ACHN (cell line): ENCODE measurements at regions of chr20 and their contacts with region 1.

Region 1: DNA sequence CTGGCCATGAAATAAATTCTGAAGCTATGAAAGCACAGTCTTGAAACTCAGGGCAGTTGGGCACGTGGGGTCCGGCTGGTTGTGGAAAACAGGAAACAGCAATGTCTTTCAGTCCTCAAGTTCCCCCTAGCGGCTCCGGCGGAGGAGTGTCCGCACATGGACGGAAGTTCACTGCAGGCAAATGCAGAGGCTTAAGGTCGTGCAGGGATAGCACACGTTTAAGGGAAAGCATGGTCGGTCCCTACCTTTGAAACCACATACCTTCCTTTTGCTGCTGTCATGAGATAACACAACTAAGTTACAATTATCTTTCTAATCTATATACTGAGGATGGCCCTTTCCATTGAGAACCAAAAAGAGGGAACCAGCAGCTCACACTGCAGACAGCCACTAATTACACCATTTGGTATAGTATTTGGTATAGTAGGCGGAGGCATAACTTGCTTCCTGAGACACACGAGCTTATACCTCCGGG is 52.6 kb upstream of the NFATC2 start:
- DNase-seq: peak; percentile 79

Region 2: GRCh38 chr20:51345601-51346101 is 249.4 kb before region 1 on chr20:
- in situ Hi-C with region 1: no loop called
- DNase-seq: no peak

Region 3: DNA sequence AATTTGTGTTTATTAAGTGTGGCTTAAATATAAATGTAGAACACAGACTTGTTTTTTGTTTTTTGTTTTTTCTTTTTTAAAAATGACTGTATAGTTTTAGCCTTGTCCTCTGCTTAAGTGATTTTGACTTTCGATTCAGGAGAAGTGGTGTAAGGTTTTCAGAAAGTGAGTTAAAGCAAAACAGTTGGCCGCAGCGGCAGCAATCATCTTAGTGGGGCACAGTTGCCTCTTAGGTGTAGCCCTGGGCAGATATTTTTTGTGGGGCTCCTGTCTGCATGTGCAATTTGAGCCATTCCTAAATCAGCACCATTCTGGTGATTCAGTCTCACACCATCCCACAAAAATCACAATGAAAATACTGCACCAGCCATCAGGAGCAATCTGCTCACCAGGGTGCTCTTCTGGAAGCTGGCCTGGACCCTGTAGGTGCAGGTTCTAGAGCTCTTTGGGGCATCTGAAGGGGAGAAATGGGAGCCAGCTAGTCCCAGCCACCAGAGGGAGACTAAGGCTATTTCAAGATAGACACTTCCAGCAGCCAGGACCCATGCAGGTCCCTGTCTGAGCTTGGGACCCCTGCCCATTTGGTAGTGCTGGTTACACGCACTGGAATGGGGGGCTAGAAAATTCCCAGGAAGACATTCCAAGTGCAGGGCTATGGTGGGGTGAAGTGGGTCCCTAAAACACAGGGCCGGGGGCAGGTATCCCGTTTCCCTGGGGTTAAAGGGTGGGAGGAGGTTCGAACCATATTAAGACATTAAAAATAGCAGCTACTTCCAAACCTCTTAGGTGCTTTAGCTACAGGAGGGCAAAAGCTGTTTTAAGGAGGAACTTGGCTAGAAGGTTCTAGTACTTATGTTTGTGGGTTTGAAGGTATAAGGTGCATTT is 209.2 kb before region 1 on chr20:
- in situ Hi-C with region 1: loop called (anchors 25 kb)
- DNase-seq: peak; percentile 41